Lower leg skin (tissue), 4 donors: ENCODE measurements at regions of chr3 and their contacts with region 1.

Region 1: GRCh38 chr3:74626011-74626410 is 11.6 kb upstream of the CNTN3 start:
- DNase-seq: no peak
- H3K4me3 ChIP-seq: no peak overlapping the region
- CTCF ChIP-seq: no peak
- POLR2A ChIP-seq: no peak

Region 2: DNA sequence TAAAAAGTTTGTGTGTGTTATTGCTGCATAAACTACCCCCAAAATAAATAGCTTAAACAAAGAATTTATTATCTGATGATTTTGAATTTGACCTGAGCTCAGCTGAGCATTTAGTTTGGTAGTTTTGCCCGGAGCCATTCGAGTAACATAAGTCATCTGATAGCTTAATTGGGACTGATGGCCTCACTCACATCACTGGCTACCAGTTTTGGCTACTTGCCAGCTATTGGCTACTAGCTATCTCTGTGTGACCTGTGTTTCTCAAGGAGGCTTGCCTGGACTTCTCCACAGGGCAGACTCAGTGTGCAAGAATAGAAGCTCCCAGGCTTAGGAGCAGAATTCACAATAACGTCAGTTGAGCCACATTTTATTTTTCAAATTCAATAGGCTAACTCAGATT is 20.6 kb before region 1 on chr3:
- intact Hi-C with region 1: loop called (anchors 2 kb)
- DNase-seq: no peak
- H3K4me3 ChIP-seq: no peak overlapping the region
- CTCF ChIP-seq: no peak
- POLR2A ChIP-seq: no peak

Region 3: GRCh38 chr3:74664606-74665005 is 38.6 kb after region 1 on chr3:
- intact Hi-C with region 1: no loop called
- DNase-seq: no peak
- H3K4me3 ChIP-seq: no peak overlapping the region
- CTCF ChIP-seq: no peak
- POLR2A ChIP-seq: no peak